GM12878 (cell line): ENCODE measurements at regions of chr10 and their contacts with region 1.

Region 1: DNA sequence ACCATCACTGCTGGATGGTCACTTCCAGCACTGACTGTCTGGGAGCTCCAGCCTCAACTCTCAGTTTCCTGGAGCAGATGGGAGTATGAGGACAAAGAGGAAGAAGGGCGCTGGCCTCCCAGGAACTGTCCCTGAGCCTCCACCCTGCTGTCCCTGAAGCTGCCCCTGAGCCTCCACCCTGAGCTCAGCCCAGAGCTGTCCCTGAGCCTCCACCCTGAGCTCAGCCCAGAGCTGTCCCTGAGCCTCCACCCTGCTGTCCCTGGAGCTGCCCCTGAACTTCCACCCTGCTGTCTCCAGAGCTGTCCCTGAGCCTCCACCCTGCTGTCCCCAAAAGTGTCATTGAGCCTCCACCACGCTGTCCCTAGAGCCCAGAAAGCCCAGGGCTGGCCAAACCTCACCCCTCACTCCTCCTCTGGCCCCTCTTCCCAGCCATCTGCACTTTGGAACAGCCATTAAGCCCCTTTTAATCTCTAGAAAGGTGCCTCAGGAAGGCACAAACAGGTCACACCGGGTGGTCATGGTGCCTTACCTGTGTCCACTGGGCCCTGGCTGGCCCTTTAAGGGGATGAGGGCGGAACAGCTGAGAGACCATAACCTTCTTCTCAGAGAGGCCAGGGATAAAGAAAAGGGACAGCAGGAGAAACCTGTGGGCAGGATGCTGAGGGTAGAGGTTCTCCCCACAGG is 30.6 kb upstream of the TUBB8 start:
- DNase-seq: no peak
- ATAC-seq: no peak
- H3K4me3 ChIP-seq: no peak overlapping the region
- H3K27ac ChIP-seq: no peak overlapping the region
- H3K4me1 ChIP-seq: no peaks in the 10 kb centered on the region
- H3K27me3 ChIP-seq: no peaks in the 10 kb centered on the region
- CTCF ChIP-seq: no peak
- EP300 ChIP-seq: no peak
- POLR2A ChIP-seq: no peak
- RAD21 ChIP-seq: no peak

Region 2: DNA sequence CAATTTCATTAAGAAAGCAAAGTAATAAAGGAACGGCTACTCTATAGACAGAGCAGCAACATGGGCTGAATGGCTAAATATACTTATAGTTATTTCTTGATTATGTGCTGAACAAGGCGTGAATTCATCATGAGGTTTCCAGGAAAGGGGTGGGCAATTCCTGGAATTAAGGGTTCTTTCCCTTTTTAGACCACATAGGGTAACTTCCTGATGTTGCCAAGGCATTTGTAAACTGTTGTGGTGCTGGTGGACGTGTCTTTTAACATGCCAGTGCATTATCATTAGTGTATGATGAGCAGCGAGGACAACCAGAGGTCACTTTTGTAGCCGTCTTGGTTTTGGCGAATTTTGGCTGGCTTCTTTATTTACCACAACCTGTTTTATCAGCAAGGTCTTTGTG is 27.1 kb after region 1 on chr10:
- CTCF ChIA-PET with region 1: no interaction called
- POLR2A ChIA-PET with region 1: no interaction called
- RAD21 ChIA-PET with region 1: no interaction called
- SMC1A ChIA-PET with region 1: no interaction called
- in situ Hi-C with region 1: no loop called
- intact Hi-C with region 1: no loop called
- DNase-seq: no peak
- ATAC-seq: no peak
- H3K4me3 ChIP-seq: no peak overlapping the region
- H3K27ac ChIP-seq: no peak overlapping the region
- H3K4me1 ChIP-seq: no peaks in the 10 kb centered on the region
- H3K27me3 ChIP-seq: no peaks in the 10 kb centered on the region
- CTCF ChIP-seq: no peak
- EP300 ChIP-seq: no peak
- POLR2A ChIP-seq: no peak
- RAD21 ChIP-seq: no peak

Region 3: GRCh38 chr10:135132-135600 is 55.5 kb after region 1 on chr10 and contains the start of gene ZMYND11:
- CTCF ChIA-PET with region 1: no interaction called
- POLR2A ChIA-PET with region 1: no interaction called
- RAD21 ChIA-PET with region 1: no interaction called
- SMC1A ChIA-PET with region 1: no interaction called
- in situ Hi-C with region 1: no loop called
- intact Hi-C with region 1: loop called (anchors 2 kb)
- DNase-seq: no peak
- ATAC-seq: peak; percentile 53
- H3K4me3 ChIP-seq: peak within 1 kb of the TSS; percentile 90
- H3K27ac ChIP-seq: peak within 1 kb of the TSS; percentile 80
- H3K4me1 ChIP-seq: no peaks in the 10 kb centered on the region
- H3K27me3 ChIP-seq: no peaks in the 10 kb centered on the region
- CTCF ChIP-seq: no peak
- EP300 ChIP-seq: no peak
- POLR2A ChIP-seq: peak; percentile 73
- RAD21 ChIP-seq: no peak
- polyA plus RNA-seq, gene ZMYND11: 3.3 to 5.4 TPM